ENCODE measurements at regions of chr5 and their contacts with region 1.

Region 1: GRCh38 chr5:34915139-34915855 is at the starts of genes BRIX1 and RAD1:
- DNase-seq: peak; percentile 96 to 99 (median 97)

Region 2: DNA sequence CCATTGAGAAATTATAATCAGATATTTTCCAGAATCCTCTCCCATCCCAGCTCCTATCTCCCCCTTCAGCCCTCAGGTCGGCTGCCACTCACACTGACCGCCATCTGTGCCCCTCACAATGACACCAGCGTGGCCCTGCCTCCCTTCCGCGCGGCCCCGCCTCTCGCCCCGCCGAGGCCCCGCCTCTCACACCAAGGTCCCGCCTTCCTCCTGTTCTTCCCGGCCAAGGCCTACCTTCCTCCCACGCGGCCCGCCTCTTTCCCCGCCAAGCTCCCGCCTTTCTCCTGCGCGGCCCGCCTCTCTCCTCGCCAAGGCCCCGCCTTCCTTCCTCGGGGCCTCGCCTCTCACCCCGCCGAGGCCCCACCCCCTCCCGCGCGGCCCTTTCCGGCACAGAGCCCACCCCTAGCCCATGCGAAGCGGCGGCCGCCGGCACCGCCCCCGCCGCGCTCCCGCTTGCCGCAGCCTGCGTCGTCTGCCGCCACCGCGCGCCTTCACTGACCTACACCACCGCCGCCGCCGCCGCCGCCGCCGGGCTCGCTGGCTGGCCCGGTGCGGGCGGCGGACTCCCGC is 13.9 kb after region 1 on chr5 and contains the start of gene DNAJC21:
- intact Hi-C with region 1: loop called (anchors 1 kb)
- DNase-seq: peak; percentile 96 to 100 (median 98)

Region 3: DNA sequence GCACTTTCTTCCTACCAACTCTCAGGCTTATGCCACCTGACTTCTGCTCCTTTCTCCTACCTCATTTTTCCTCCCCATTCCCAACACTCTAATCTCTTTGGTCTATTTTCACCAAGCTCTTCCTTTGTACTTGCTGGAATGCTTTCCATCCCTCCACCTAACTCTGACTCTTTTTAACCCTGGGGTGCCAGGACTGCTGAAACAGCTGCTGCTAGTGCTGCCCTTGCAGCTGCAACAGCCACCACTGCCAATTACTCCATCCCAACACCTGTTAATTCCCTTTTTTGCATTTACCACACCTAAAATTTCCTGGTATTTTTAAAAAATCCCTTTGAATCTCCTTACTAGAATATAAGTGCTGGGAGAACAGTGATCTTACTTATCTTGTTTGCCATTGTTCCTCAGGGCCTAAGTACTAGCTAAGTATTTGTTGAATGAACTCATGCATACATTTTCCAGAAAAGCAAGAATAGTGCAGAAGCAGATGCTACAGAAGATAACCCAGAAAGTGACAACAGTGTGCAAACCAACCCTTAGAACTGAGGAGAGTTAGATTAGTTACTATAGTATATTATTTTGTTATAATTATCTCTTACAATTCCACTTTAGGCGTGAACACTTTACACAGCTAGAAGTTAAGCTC is 1315.0 kb after region 1 on chr5:
- intact Hi-C with region 1: no loop called
- DNase-seq: no peak

Measured in posterior cingulate gyrus (tissue), 11 donors.